Activated B cell treated with CpG ODN at 0.5 μM for 24 hours (primary cell): ENCODE measurements at regions of chr19 and their contacts with region 1.

Region 1: GRCh38 chr19:33186431-33187182 is 7.5 kb upstream of the LRP3 start:
- DNase-seq: no peak
- ATAC-seq: no peak
- H3K4me3 Mint-ChIP-seq: no peak overlapping the region
- H3K27ac Mint-ChIP-seq: no peak overlapping the region
- H3K4me1 Mint-ChIP-seq: peaks cover 10% of the 10 kb centered on the region
- H3K27me3 Mint-ChIP-seq: peaks cover 4% of the 10 kb centered on the region
- CTCF ChIP-seq: no peak

Region 2: DNA sequence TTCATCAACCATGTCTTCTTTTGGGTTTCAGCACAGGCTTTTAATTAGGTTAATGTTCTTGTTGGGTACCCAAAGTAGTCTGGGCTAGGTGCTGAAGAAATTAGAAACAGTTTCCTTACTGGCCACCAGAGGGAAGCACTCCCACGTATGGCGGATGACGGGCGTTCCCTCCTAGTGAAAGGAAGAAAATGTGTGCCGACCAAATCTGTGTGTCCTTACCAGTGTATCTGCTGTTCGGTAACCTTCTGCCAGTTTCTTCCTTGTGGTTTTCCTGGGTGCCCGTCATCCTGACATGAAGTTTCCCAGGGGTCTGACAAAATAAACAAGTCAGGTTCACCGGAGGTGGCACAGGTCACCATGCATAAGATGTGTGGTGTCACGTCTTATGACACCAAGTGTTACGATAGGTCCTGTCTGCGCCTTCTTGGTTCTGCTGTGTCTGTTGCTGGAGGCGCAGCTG is 60.6 kb before region 1 on chr19:
- CTCF ChIA-PET with region 1: interaction called, 15 read pairs
- POLR2A ChIA-PET with region 1: interaction called, 3 read pairs
- intact Hi-C with region 1: loop called (anchors 1 kb)
- DNase-seq: peak; percentile 21
- ATAC-seq: peak; percentile 87
- H3K4me3 Mint-ChIP-seq: no peak overlapping the region
- H3K27ac Mint-ChIP-seq: no peak overlapping the region
- H3K4me1 Mint-ChIP-seq: peaks cover 3% of the 10 kb centered on the region
- H3K27me3 Mint-ChIP-seq: no peaks in the 10 kb centered on the region
- CTCF ChIP-seq: no peak

Region 3: GRCh38 chr19:33143897-33144405 is 42.7 kb before region 1 on chr19:
- CTCF ChIA-PET with region 1: interaction called, 42 read pairs
- POLR2A ChIA-PET with region 1: no interaction called
- intact Hi-C with region 1: loop called (anchors 1 kb)
- DNase-seq: peak; percentile 38
- ATAC-seq: peak; percentile 98
- H3K4me3 Mint-ChIP-seq: peak overlapping the region; percentile 44
- H3K27ac Mint-ChIP-seq: no peak overlapping the region
- H3K4me1 Mint-ChIP-seq: peaks cover 5% of the 10 kb centered on the region
- H3K27me3 Mint-ChIP-seq: peaks cover 17% of the 10 kb centered on the region
- CTCF ChIP-seq: no peak

Region 4: GRCh38 chr19:33241530-33242101 is 55.0 kb after region 1 on chr19:
- CTCF ChIA-PET with region 1: no interaction called
- POLR2A ChIA-PET with region 1: no interaction called
- intact Hi-C with region 1: no loop called
- DNase-seq: no peak
- ATAC-seq: no peak
- H3K4me3 Mint-ChIP-seq: no peak overlapping the region
- H3K27ac Mint-ChIP-seq: no peak overlapping the region
- H3K4me1 Mint-ChIP-seq: no peaks in the 10 kb centered on the region
- H3K27me3 Mint-ChIP-seq: peaks cover 2% of the 10 kb centered on the region
- CTCF ChIP-seq: no peak